Posterior cingulate gyrus (tissue), 11 donors: ENCODE measurements at regions of chr6 and their contacts with region 1.

Region 1: DNA sequence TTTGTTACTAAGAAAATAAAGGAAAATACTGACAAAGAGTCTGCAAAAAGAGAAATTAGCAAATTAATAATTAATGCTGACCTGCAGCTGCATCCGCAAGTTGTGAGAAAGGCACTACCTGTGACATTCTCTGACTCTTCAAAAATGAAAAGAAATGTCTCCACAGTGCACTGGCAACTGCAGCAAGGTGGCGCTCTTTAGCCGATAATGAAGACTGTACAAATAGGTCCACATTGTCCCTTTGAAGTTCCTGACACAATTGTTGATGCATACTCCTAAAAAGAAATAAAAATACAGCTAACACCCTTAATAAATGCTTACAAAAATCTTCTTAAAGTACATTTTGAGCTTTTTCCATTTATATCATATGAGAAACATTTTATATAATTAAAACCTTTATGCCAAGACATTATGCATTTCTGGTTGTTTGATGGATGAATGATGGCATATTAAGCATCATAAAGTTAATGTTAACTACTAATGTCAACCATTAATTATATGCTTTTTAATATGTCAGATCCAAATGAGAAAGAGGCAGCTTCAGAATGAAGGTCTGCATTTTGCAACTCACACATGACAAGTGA is 96.5 kb downstream of the MMS22L start:
- DNase-seq: peak; percentile 24 to 92 (median 74)

Region 2: DNA sequence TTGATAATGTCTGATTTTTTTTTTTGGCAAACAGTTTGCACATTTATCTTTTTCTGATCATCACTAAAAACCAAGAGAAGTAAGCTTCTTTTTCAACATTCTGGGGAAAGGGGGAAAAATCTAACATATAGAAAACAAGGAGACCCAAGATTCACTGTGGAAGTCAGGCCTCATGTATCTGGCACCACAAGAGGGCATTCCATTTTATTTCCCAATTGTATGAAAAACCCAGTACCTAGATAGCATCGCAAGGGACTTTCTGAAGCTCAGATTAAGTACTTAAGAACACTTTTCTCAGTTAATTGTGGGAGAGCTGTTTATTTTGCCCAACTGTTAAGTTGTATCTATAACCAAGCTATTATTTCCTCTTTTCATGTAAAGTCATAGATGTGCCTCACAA is 109.1 kb before region 1 on chr6:
- intact Hi-C with region 1: loop called (anchors 10 kb)
- DNase-seq: no peak

Region 3: DNA sequence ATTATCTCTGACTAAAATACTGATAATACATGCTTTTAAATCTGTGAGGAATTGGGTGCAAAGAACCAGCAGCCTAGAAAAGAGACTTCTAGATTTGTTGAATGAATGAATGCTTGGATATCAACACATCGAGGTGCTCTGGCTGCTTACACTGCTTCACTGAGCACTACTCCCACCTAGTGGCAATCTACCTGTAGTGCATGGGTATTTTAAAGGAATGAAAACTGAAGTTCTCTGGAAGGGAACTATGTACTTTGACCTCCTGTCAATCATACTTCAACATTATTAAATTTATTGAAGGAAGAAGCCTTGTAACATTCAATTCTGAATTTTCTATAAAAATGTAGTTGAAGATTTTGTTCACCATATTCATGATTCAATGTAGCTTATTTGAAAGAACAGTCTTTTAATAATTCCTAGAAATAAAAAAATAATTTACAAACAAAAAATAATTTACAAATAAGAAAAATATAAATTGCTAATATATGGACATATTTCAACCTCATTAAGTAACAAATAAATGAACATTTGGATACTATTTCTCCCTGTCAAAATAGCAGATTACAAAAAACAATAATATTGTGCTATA is 207.7 kb after region 1 on chr6:
- intact Hi-C with region 1: loop called (anchors 2 kb)
- DNase-seq: peak in 2 of 10 donors; percentile 18 to 40

Region 4: DNA sequence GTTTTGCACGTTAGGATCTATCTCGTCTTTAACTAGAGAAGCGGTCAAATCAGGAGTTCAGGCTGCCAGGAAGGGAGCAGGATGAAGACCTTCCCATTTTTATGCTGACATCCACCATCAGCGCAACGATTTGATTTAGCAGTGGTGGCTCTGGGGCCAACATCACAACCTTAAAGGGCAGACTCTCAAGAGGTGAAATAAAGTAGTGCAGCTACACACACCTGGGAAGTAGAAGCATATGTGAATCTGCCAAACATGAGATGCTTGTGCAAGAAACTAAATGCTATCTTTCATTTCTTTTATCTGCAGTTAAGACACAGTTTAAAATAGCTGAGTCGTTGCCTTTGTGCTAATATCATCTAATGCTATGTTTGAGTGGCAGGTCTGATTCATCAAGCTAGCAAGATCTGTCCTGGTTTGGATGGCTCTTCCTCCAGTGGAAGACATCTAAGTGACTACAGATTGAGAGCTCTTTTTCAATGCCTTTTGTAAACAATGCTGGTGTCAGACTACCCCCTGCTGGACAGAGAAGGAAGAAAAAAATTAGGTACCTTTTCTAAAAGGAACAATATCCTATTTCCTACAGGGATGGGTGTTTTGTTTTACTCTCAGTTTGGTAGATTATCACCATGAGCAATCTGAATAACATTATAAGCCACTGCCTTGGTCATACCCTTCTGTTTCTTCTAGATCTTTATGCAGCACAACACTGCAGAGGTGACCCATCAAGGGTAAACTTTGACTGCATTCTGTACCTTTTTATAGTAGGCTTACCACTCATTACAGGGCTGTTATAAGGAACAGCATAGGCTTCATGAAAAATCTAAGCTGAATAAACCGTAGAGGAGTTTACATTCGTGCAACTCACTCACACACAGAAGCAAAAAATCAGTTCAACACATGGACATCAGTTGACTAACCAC is 1932.9 kb after region 1 on chr6:
- intact Hi-C with region 1: loop called (anchors 5 kb)
- DNase-seq: peak in 2 of 10 donors; percentile 14 to 27